H1 (cell line): ENCODE measurements at regions of chr3 and their contacts with region 1.

Region 1: DNA sequence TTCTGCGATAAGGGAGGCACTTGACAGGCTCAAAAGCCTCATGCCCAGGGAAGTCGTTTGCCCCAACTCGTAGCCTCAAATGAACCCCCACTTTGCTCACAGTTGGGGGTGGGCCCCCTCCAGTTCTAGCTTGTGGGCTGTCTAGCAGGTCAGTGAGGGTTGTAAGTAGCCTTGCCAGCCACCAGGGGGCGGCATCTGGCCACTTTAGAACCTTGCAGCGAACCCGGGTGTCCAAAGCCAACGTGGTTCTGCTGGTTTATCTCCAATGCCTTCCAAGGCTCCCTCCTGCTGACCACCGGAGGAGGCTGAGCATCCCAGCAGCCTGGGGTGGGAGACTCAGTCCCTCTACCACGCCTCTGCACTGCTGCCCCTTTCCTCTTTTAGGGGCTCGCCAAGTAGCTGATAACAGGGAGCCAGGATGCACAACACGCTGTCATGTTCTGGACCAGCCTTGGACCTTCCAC is 9.2 kb upstream of the RBSN start:
- DNase-seq: peak; percentile 68 to 91
- H3K4me3 ChIP-seq: no peak overlapping the region
- H3K27ac ChIP-seq: no peak overlapping the region
- H3K4me1 ChIP-seq: no peaks in the 10 kb centered on the region; a peak in 1 of 7 replicates
- H3K27me3 ChIP-seq: no peaks in the 10 kb centered on the region
- CTCF ChIP-seq: peak; percentile 88 to 93 (median 89)
- EP300 ChIP-seq: no peak
- POLR2A ChIP-seq: no peak
- RAD21 ChIP-seq: peak; percentile 92 to 95

Region 2: GRCh38 chr3:15120986-15121385 is 12.9 kb after region 1 on chr3:
- CTCF ChIA-PET with region 1: interaction called, 92 read pairs
- POLR2A ChIA-PET with region 1: no interaction called
- DNase-seq: no peak
- H3K4me3 ChIP-seq: no peak overlapping the region
- H3K27ac ChIP-seq: no peak overlapping the region
- H3K4me1 ChIP-seq: no peaks in the 10 kb centered on the region; a peak in 1 of 7 replicates
- H3K27me3 ChIP-seq: peaks cover 0 to 3% (median 0%) of the 10 kb centered on the region in 4 experiments; a peak in 2 of 7 replicates
- CTCF ChIP-seq: no peak
- EP300 ChIP-seq: no peak
- POLR2A ChIP-seq: no peak
- RAD21 ChIP-seq: no peak

Region 3: DNA sequence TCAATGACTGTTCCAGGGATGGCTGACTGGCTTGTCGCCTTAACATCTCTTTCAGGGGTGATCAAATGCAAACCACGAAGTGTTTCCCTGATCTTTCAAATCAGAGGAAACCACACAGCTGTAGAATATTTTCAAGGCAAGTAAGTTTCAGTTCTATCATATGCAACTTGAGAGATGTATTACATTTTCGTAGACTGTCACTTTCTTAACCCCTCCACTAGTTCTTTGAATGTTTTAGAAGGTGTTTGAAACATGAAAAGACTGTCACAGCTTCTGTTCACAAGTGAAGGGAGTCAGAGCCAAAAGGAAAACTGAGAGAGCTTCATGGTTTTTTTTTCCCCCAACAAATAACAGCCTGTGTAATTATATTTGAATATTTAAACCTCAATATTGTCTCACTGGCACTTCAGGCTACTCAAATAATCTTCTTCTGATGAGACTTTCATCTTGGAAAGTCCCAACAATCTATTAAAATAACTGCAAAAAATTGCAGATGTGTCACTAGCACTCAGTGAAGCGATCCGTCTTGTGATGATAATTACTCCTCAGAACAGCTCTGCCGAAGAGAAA is 72.0 kb after region 1 on chr3:
- CTCF ChIA-PET with region 1: interaction called, 11 read pairs
- POLR2A ChIA-PET with region 1: no interaction called
- DNase-seq: no peak
- H3K4me3 ChIP-seq: no peak overlapping the region
- H3K27ac ChIP-seq: no peak overlapping the region
- H3K4me1 ChIP-seq: no peaks in the 10 kb centered on the region
- H3K27me3 ChIP-seq: no peaks in the 10 kb centered on the region; a peak in 2 of 7 replicates
- CTCF ChIP-seq: no peak
- EP300 ChIP-seq: no peak
- POLR2A ChIP-seq: no peak
- RAD21 ChIP-seq: no peak

Region 4: GRCh38 chr3:15205934-15206661 is 98.0 kb after region 1 on chr3 and contains the start of gene CAPN7:
- CTCF ChIA-PET with region 1: interaction called, 36 read pairs
- POLR2A ChIA-PET with region 1: interaction called, 3 read pairs
- DNase-seq: peak; percentile 23 to 86
- H3K4me3 ChIP-seq: peak within 1 kb of the TSS; percentile 83 to 92 (median 86)
- H3K27ac ChIP-seq: peak within 1 kb of the TSS; percentile 73; the same call in 1 of the 2 replicates
- H3K4me1 ChIP-seq: peaks cover 0 to 3% (median 1%) of the 10 kb centered on the region in 4 experiments; a peak in 3 of 7 replicates
- H3K27me3 ChIP-seq: no peaks in the 10 kb centered on the region; a peak in 2 of 7 replicates
- CTCF ChIP-seq: peak; percentile 31 to 69 (median 57)
- EP300 ChIP-seq: no peak
- POLR2A ChIP-seq: peak in 1 of 2 experiments; percentile 67; a peak in 2 of 3 replicates
- RAD21 ChIP-seq: peak; percentile 14 to 30; a peak in 1 of 4 replicates
- total RNA-seq, gene CAPN7: 13.0 and 13.2 TPM in 2 replicates

Region 5: DNA sequence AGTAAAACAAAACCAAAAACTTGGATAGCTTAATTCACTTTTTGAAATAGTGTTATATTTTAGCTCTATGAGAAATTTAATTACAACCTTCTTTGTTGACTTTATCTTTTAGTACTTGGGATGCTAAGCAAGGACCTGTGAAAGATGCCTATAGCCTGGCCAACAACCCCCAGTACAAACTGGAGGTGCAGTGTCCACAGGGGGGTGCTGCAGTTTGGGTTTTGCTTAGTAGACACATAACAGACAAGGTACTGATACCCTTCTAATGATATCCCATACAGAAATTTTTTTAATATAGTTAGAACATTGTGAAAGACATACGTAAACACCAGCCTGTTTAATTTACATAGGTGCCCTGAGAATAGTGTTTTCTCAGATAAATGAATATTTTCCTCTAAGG is 133.2 kb after region 1 on chr3:
- CTCF ChIA-PET with region 1: interaction called, 12 read pairs
- POLR2A ChIA-PET with region 1: no interaction called
- DNase-seq: no peak
- H3K4me3 ChIP-seq: no peak overlapping the region
- H3K27ac ChIP-seq: no peak overlapping the region
- H3K4me1 ChIP-seq: no peaks in the 10 kb centered on the region
- H3K27me3 ChIP-seq: no peaks in the 10 kb centered on the region
- CTCF ChIP-seq: peak; percentile 39 to 49 (median 45)
- EP300 ChIP-seq: no peak
- POLR2A ChIP-seq: no peak
- RAD21 ChIP-seq: peak; percentile 54 to 68